CD8-positive, alpha-beta T cell (primary cell): ENCODE measurements at regions of chr2 and their contacts with region 1.

Region 1: DNA sequence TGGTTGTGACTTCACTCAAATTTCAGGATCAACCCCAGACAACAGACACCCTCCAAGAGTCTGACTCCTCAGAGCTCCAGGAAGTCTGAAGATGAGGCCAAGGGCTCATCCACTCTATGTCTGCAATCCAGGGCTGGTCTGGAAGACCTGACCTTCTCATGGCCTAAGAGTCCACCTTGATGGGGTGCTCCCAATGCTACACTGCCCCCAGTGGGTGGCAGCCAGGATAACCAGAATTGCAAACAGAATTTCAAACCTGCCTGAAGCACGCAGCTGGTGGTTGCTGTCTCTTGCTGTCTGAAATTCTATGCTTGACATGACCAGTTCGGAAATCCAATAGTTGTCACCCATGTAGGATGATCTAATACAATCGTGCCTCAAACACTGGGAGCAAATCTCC is 96.0 kb downstream of the UXS1 start:
- DNase-seq: peak in 4 of 9 experiments; percentile 25 to 56 (median 43)
- ATAC-seq: no peak
- H3K4me3 ChIP-seq: no peak overlapping the region
- H3K4me3 Mint-ChIP-seq: no peak overlapping the region
- H3K27ac ChIP-seq: no peak overlapping the region
- H3K27ac Mint-ChIP-seq: peak overlapping the region; percentile 95
- H3K4me1 ChIP-seq: peaks cover 53% of the 10 kb centered on the region
- H3K4me1 Mint-ChIP-seq: peaks cover 62% of the 10 kb centered on the region
- H3K27me3 ChIP-seq: no peaks in the 10 kb centered on the region
- H3K27me3 Mint-ChIP-seq: no peaks in the 10 kb centered on the region
- CTCF ChIP-seq: peak; percentile 16

Region 2: GRCh38 chr2:105369747-105370690 is 728.1 kb before region 1 on chr2:
- CTCF ChIA-PET with region 1: no interaction called
- POLR2A ChIA-PET with region 1: no interaction called
- intact Hi-C with region 1: loop called in 1 of 2 experiments (anchors 10 kb)
- DNase-seq: peak; percentile 73 to 91 (median 87)
- ATAC-seq: peak; percentile 100
- H3K4me3 ChIP-seq: no peak overlapping the region
- H3K4me3 Mint-ChIP-seq: no peak overlapping the region
- H3K27ac ChIP-seq: no peak overlapping the region
- H3K27ac Mint-ChIP-seq: no peak overlapping the region
- H3K4me1 ChIP-seq: peaks cover 6% of the 10 kb centered on the region
- H3K4me1 Mint-ChIP-seq: peaks cover 11% of the 10 kb centered on the region
- H3K27me3 ChIP-seq: no peaks in the 10 kb centered on the region
- H3K27me3 Mint-ChIP-seq: peaks cover 2% of the 10 kb centered on the region
- CTCF ChIP-seq: peak; percentile 81

Region 3: DNA sequence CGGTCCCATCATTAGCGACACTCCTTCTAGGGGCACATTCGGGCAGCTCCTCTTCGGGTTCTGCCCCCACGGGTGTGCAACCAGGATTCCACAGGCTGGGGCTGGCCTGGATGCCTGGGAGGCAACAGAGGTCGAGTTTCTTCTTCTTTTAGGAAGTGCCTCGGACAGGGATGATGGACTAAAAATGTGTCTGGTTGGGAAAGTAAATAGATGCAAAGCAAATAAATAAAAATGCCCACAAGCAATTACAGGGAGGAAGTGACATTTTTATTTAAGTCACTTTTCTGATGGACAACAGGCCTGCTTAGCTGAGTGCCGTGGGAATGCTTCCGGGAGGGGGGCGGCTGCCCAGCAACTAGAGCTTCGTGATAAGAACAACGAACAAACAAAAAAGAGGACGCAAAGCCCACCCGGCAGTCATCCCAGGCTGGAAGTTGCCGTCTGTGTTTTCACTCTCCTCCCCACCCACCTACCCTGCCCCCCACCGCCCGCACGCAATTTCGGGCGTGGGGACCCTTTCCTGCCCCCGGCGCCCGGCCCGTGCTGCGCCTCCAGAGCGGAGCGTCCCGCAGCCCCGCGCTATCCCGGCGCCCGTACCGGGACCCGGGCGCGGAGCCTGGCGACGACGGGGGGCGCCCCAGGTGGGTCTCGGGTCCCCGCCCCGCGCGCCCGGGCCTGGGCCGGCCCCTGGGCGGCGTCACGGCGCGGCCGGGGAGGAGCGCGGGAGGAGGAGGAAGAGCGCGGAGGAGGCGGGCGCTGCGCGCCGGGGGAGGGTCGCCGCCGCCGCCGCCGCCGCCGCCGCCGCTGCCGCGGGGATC is 353.8 kb before region 1 on chr2:
- CTCF ChIA-PET with region 1: interaction called, 7 read pairs
- POLR2A ChIA-PET with region 1: interaction called, 8 read pairs
- intact Hi-C with region 1: loop called (anchors 1 to 2 kb)
- DNase-seq: peak; percentile 37 to 87 (median 70)
- ATAC-seq: peak; percentile 74
- H3K4me3 ChIP-seq: peak overlapping the region; percentile 31 to 49
- H3K4me3 Mint-ChIP-seq: peak overlapping the region; percentile 86
- H3K27ac ChIP-seq: peak overlapping the region; percentile 31 to 51
- H3K27ac Mint-ChIP-seq: peak overlapping the region; percentile 94
- H3K4me1 ChIP-seq: peaks cover 58% of the 10 kb centered on the region
- H3K4me1 Mint-ChIP-seq: peaks cover 78% of the 10 kb centered on the region
- H3K27me3 ChIP-seq: no peaks in the 10 kb centered on the region
- H3K27me3 Mint-ChIP-seq: no peaks in the 10 kb centered on the region
- CTCF ChIP-seq: no peak

Region 4: DNA sequence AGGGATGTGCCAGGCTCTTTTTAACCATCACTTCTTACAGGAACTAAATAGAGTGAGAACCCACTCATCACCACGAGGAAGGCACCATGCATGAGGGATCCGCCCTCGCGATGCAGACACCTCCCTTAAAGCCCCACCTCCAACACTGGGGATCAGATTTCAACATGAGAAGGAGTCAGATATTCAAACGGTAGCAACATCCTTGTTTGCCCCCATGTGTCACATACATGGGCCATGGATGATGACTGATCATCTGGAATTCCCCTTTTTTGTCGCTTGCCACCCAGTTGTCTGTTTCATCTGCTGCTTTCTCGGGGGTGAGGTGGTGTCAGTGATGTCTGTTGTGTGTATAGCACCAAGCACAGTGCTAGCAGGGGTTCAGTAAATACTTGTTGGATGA is 295.5 kb before region 1 on chr2:
- CTCF ChIA-PET with region 1: interaction called, 8 read pairs
- POLR2A ChIA-PET with region 1: interaction called, 21 read pairs
- intact Hi-C with region 1: loop called (anchors 2 to 5 kb)
- DNase-seq: peak in 8 of 9 experiments; percentile 26 to 95 (median 66)
- ATAC-seq: peak; percentile 76
- H3K4me3 ChIP-seq: peak overlapping the region in 1 of 2 experiments; percentile 9
- H3K4me3 Mint-ChIP-seq: peak overlapping the region; percentile 40
- H3K27ac ChIP-seq: peak overlapping the region; percentile 51 to 88
- H3K27ac Mint-ChIP-seq: peak overlapping the region; percentile 96
- H3K4me1 ChIP-seq: peaks cover 94% of the 10 kb centered on the region
- H3K4me1 Mint-ChIP-seq: peaks cover 93% of the 10 kb centered on the region
- H3K27me3 ChIP-seq: no peaks in the 10 kb centered on the region
- H3K27me3 Mint-ChIP-seq: no peaks in the 10 kb centered on the region
- CTCF ChIP-seq: no peak

Region 5: GRCh38 chr2:105977212-105977611 is 120.9 kb before region 1 on chr2:
- CTCF ChIA-PET with region 1: no interaction called
- POLR2A ChIA-PET with region 1: no interaction called
- intact Hi-C with region 1: loop called in 1 of 2 experiments (anchors 5 kb)
- DNase-seq: no peak
- ATAC-seq: no peak
- H3K4me3 ChIP-seq: no peak overlapping the region
- H3K4me3 Mint-ChIP-seq: no peak overlapping the region
- H3K27ac ChIP-seq: no peak overlapping the region
- H3K27ac Mint-ChIP-seq: peak overlapping the region; percentile 82
- H3K4me1 ChIP-seq: peaks cover 58% of the 10 kb centered on the region
- H3K4me1 Mint-ChIP-seq: peaks cover 52% of the 10 kb centered on the region
- H3K27me3 ChIP-seq: no peaks in the 10 kb centered on the region
- H3K27me3 Mint-ChIP-seq: no peaks in the 10 kb centered on the region
- CTCF ChIP-seq: no peak

Region 6: GRCh38 chr2:106160786-106161261 is 62.7 kb after region 1 on chr2:
- CTCF ChIA-PET with region 1: interaction called, 6 read pairs
- POLR2A ChIA-PET with region 1: interaction called, 12 read pairs
- intact Hi-C with region 1: loop called in 1 of 2 experiments (anchors 2 kb)
- DNase-seq: peak in 8 of 9 experiments; percentile 28 to 77 (median 55)
- ATAC-seq: peak; percentile 55
- H3K4me3 ChIP-seq: peak overlapping the region; percentile 68 to 69
- H3K4me3 Mint-ChIP-seq: peak overlapping the region; percentile 92
- H3K27ac ChIP-seq: peak overlapping the region; percentile 77 to 85
- H3K27ac Mint-ChIP-seq: peak overlapping the region; percentile 98
- H3K4me1 ChIP-seq: peaks cover 87% of the 10 kb centered on the region
- H3K4me1 Mint-ChIP-seq: peaks cover 92% of the 10 kb centered on the region
- H3K27me3 ChIP-seq: no peaks in the 10 kb centered on the region
- H3K27me3 Mint-ChIP-seq: no peaks in the 10 kb centered on the region
- CTCF ChIP-seq: no peak